ENCODE measurements at regions of chr5 and their contacts with region 1.

Region 1: DNA sequence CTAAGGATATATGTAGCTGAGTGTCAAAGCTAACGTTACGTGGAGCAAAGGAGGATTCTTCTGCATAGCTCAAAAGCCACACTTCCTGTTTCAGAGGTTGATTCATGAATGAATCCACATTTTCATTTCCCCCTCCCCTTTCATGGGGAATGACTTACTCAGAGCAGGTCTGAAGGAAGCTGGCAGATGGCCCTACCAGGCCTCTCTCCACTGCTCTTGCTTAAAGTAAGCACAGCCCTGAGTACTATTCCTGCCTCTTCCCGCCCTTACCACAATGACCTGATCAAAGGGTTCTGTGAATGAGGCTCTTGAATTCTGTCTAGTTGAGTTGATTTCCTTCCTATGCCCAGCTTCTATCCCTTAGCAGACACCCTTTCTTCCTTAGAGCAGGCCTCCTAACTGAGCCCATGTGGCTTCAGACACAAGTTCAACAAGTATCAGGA is 6.3 kb downstream of the IGIP start:
- DNase-seq: peak; percentile 88
- H3K4me3 Mint-ChIP-seq: no peak overlapping the region
- H3K27ac Mint-ChIP-seq: peak overlapping the region; percentile 44
- H3K4me1 Mint-ChIP-seq: peaks cover 12% of the 10 kb centered on the region
- H3K27me3 Mint-ChIP-seq: no peaks in the 10 kb centered on the region
- CTCF ChIP-seq: no peak

Region 2: DNA sequence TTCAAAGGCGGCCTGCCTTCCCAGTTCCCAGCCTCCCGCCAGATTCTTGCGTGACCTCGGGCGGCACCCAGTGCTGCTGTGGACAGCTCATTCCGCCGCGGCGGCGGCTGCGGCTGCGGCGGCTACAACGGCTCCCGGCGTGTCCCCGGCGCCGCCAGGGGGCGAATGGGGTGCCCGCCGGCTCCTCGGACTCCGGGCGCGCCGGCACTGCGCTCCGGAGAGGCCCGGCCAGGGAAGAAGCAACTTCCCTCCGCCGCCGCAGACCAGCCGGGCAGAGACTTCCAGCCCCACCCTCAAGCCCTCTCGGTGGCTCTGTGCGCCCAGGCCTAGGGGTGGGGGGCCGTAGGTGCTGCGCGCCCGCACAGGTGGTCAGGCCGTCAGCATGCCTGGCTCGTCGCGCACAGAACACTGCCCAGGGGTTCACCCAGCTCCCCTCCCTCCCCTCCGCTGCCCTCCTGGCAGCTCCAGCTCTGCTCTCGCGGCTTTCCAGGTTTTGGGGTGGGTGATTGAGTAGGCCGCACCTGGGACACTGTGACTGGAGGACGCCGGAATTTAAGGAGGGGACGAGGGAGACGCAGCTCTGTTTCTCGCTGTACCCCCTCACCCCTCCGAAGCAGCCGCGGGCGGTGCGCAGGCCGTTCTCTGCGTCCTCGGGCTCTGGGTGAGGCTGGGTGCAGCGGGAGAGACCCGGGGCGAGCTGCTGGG is 14.0 kb after region 1 on chr5:
- CTCF ChIA-PET with region 1: interaction called, 34 read pairs
- POLR2A ChIA-PET with region 1: interaction called, 5 read pairs
- intact Hi-C with region 1: no loop called
- DNase-seq: peak; percentile 39
- H3K4me3 Mint-ChIP-seq: no peak overlapping the region
- H3K27ac Mint-ChIP-seq: no peak overlapping the region
- H3K4me1 Mint-ChIP-seq: peaks cover 11% of the 10 kb centered on the region
- H3K27me3 Mint-ChIP-seq: no peaks in the 10 kb centered on the region
- CTCF ChIP-seq: peak; percentile 44

Region 3: GRCh38 chr5:140157032-140157803 is 25.2 kb after region 1 on chr5:
- CTCF ChIA-PET with region 1: interaction called, 10 read pairs
- POLR2A ChIA-PET with region 1: interaction called, 3 read pairs
- intact Hi-C with region 1: no loop called
- DNase-seq: peak; percentile 93
- H3K4me3 Mint-ChIP-seq: peak overlapping the region; percentile 62
- H3K27ac Mint-ChIP-seq: peak overlapping the region; percentile 9
- H3K4me1 Mint-ChIP-seq: peaks cover 9% of the 10 kb centered on the region
- H3K27me3 Mint-ChIP-seq: no peaks in the 10 kb centered on the region
- CTCF ChIP-seq: peak; percentile 97

Region 4: DNA sequence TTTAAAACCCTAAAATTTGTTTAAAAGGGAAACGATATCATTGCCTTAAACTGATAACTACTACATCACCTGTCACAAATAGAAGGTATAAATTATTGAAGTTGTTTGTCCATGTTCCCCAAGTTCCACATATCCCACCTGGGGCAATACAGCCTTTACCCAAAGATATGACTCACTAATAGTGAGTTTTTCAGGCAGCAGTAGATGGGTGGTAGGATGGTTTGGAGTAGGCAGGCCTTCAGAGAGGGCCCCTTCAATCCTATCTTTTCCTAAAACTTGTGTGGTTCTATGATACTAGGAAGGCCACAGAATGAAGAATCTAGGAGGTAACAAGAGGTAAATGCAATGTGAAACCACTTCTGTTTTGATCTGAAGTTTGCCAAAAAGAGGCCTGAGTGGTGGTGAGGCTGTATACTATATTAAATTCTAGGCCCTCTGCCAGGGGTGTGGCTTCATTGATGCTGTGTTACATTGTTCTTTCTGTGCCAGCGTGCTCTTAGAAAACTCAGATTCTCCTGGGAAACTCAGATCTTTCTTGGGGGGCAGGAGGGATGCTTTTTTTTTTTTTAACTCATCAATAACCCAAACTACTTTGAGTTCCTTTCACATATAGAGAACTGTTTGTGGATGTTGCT is 50.2 kb after region 1 on chr5:
- CTCF ChIA-PET with region 1: no interaction called
- POLR2A ChIA-PET with region 1: no interaction called
- intact Hi-C with region 1: no loop called
- DNase-seq: peak; percentile 68
- H3K4me3 Mint-ChIP-seq: no peak overlapping the region
- H3K27ac Mint-ChIP-seq: peak overlapping the region; percentile 27
- H3K4me1 Mint-ChIP-seq: peaks cover 16% of the 10 kb centered on the region
- H3K27me3 Mint-ChIP-seq: no peaks in the 10 kb centered on the region
- CTCF ChIP-seq: no peak

Measured in MCF 10A (cell line).